ENCODE measurements at regions of chr20 and their contacts with region 1.

Region 1: DNA sequence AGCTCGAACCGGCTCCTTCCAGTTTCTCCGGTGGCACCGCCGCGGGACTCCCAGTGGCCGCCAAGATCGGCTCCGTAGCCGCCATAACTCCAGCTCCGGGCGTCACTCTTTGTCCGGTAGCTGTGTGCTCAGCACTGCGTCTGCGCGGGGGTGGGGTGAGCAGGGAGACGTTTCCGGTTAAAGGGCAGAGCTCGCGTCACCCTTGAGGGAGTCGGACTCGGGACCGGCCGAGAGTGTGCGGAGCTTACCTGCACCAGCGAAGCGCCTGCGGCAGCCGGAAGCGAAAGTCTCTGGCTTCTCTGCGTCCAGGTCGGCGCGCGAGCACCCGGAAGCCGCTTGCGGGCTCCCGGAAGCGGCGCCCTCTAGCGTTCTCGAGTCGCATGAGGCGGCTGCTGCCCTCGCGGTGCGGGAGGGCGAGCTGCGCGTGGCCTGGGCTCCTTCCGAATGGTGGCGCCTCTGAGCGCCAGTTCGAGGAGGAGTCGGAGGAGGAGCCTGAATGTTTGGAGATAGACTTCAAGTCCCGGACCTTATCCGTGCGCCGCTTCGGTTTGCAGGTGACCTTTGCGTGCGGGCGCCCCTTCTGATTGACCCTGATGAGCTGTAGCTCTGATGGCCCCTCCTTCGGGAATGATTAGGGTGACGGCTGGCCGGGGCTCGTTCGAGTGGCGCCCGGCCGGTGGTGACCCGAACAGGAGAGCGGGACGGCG is at the start of gene SCAND1:
- DNase-seq: peak; percentile 96
- H3K4me3 Mint-ChIP-seq: peak within 1 kb of the TSS; percentile 100
- H3K27ac Mint-ChIP-seq: peak within 1 kb of the TSS; percentile 100
- H3K4me1 Mint-ChIP-seq: peaks cover 21% of the 10 kb centered on the region
- H3K27me3 Mint-ChIP-seq: peaks cover 8% of the 10 kb centered on the region
- total RNA-seq, gene SCAND1: 39.7 and 41.2 TPM in 2 replicates

Region 2: DNA sequence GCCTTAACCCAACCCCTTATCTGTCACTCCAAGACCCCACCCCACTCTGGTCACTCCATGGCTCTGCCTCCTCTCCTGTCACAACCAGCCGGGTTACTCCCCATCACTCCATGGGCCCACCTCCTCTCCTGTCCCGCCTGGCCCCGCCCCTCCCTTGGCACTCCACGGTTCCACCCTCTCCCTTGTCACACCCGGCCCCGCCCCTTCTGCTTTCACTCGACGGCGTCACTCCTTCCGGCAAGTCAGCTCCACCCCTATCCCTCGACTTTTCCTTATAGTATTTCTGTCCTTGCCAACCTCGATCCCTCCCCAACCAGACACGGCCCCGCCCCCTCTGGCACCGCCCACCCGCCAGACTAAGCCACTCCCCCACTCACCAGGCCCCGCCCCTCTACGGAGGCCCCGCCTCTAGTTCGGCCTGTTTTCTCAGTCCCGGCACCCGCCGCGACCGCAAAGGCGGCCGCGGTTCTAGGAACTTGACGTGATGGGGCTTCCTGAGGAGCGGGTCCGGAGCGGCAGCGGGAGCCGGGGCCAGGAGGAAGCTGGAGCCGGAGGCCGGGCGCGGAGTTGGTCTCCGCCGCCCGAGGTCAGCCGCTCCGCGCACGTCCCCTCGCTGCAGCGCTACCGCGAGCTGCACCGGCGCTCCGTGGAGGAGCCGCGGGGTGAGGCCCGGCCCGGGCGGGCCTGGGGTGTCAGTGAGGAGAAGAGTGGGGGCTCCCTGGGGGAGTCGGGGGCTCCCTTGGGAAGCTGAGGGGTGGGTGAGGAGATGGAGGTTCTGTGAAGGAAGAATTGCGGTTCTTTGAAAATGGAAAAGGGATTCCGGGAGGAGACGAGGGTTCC is 1078.0 kb before region 1 on chr20 and contains the start of gene ACSS2:
- intact Hi-C with region 1: loop called (anchors 5 kb)
- DNase-seq: peak; percentile 95
- H3K4me3 Mint-ChIP-seq: peak within 1 kb of the TSS; percentile 96
- H3K27ac Mint-ChIP-seq: peak within 1 kb of the TSS; percentile 82
- H3K4me1 Mint-ChIP-seq: peaks cover 73% of the 10 kb centered on the region
- H3K27me3 Mint-ChIP-seq: peaks cover 4% of the 10 kb centered on the region
- total RNA-seq, gene ACSS2: 38.0 and 45.3 TPM in 2 replicates

Region 3: GRCh38 chr20:35541783-35542588 is 412.4 kb before region 1 on chr20 and contains the start of gene ERGIC3:
- intact Hi-C with region 1: loop called (anchors 2 kb)
- DNase-seq: peak; percentile 96
- H3K4me3 Mint-ChIP-seq: peak within 1 kb of the TSS; percentile 90
- H3K27ac Mint-ChIP-seq: peak within 1 kb of the TSS; percentile 88
- H3K4me1 Mint-ChIP-seq: peaks cover 12% of the 10 kb centered on the region
- H3K27me3 Mint-ChIP-seq: no peaks in the 10 kb centered on the region
- total RNA-seq, gene ERGIC3: 132 and 137 TPM in 2 replicates

Region 4: GRCh38 chr20:35699127-35699975 is 255.0 kb before region 1 on chr20 and contains the starts of genes NFS1 and ROMO1:
- intact Hi-C with region 1: loop called (anchors 1 kb)
- DNase-seq: peak; percentile 80
- H3K4me3 Mint-ChIP-seq: peak within 1 kb of the TSS; percentile 92
- H3K27ac Mint-ChIP-seq: peak within 1 kb of the TSS; percentile 94
- H3K4me1 Mint-ChIP-seq: peaks cover 38% of the 10 kb centered on the region
- H3K27me3 Mint-ChIP-seq: no peaks in the 10 kb centered on the region
- total RNA-seq, gene NFS1: 35.7 and 36.2 TPM in 2 replicates
- total RNA-seq, gene ROMO1: 80.3 and 95.6 TPM in 2 replicates

Region 5: DNA sequence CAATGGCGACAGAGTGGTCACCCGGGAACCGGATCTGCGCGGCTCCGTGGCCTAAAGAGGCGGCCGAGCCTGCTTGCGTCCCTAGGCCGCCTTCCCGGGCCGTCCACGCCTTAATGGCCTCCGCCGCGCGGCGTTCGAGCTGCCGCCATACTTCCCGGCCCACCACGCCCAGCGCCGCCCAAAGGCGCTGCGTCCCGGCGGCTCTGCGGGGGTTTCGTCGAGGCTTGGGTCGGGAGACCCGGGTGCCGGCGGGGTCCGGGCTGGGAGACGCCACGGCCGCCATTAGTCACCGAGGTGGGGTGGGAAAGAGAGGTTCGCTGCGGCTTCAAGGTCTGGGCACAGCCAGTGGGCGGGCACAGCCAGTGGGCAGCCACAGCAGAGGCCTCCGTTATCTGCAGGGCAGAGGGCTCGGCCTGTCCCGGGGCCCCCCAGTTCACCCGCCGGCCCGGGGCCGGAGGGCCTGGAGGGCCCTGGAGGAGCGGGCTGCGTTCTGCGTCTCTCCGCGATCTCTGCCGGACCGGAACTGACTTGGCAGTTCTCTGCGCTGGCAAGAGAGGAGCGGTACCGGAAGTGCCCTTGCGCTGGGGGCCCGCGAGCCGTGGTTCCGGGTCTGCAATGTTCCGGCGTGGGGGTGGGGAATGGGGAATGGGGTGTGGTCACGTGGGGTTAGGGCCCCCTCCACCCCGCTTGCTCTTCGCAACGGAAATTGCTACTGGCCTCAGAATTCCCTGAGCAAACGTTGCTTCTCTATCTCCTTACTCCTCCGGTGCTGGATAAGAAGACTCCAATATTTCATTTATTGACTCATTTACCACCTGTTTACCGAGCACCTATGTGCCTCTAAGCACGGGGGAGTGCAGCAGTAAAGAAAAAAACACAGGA is 96.3 kb after region 1 on chr20:
- intact Hi-C with region 1: loop called (anchors 2 kb)
- DNase-seq: peak; percentile 81
- H3K4me3 Mint-ChIP-seq: peak overlapping the region; percentile 97
- H3K27ac Mint-ChIP-seq: peak overlapping the region; percentile 90
- H3K4me1 Mint-ChIP-seq: peaks cover 39% of the 10 kb centered on the region
- H3K27me3 Mint-ChIP-seq: peaks cover 7% of the 10 kb centered on the region

Region 6: GRCh38 chr20:36491901-36492617 is 537.7 kb after region 1 on chr20:
- intact Hi-C with region 1: no loop called
- DNase-seq: peak; percentile 57
- H3K4me3 Mint-ChIP-seq: peak overlapping the region; percentile 27
- H3K27ac Mint-ChIP-seq: peak overlapping the region; percentile 76
- H3K4me1 Mint-ChIP-seq: peaks cover 30% of the 10 kb centered on the region
- H3K27me3 Mint-ChIP-seq: no peaks in the 10 kb centered on the region

Region 7: GRCh38 chr20:36605399-36606157 is 651.2 kb after region 1 on chr20 and contains the start of gene RAB5IF:
- intact Hi-C with region 1: loop called (anchors 1 kb)
- DNase-seq: peak; percentile 100
- H3K4me3 Mint-ChIP-seq: peak within 1 kb of the TSS; percentile 98
- H3K27ac Mint-ChIP-seq: peak within 1 kb of the TSS; percentile 94
- H3K4me1 Mint-ChIP-seq: peaks cover 32% of the 10 kb centered on the region
- H3K27me3 Mint-ChIP-seq: peaks cover 2% of the 10 kb centered on the region
- total RNA-seq, gene RAB5IF: 112 and 119 TPM in 2 replicates

Region 8: GRCh38 chr20:37095599-37096414 is 1141.5 kb after region 1 on chr20 and contains the start of gene RBL1:
- intact Hi-C with region 1: loop called (anchors 10 kb)
- DNase-seq: peak; percentile 83
- H3K4me3 Mint-ChIP-seq: peak within 1 kb of the TSS; percentile 99
- H3K27ac Mint-ChIP-seq: peak within 1 kb of the TSS; percentile 100
- H3K4me1 Mint-ChIP-seq: peaks cover 37% of the 10 kb centered on the region
- H3K27me3 Mint-ChIP-seq: peaks cover 3% of the 10 kb centered on the region
- total RNA-seq, gene RBL1: 49.2 and 53.7 TPM in 2 replicates